T-cell (primary cell): ENCODE measurements at regions of chr17 and their contacts with region 1.

Region 1: DNA sequence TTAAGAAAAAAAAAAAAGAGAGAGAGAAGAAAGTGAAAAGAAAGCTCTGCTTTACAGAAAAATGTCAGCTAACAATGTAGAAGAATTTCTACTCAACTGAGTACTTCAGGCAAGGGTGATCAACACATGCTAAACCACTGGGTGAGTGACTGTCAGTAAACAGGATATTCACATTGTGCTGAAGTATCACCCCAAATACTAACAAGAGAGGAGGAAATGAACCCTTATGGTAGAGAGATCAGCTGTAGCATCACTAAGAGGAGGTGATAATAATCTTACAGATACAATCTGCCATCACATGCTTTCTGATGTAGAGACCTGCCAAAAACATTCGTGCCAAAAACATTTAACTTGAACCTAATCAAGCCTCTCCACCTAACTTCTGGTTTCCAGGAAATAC is 30.7 kb upstream of the ICAM2 start:
- DNase-seq: peak in 18 of 35 experiments; percentile 6 to 72 (median 26)
- ATAC-seq: peak; percentile 99 to 100 (median 100)
- H3K4me3 ChIP-seq: no peak overlapping the region
- H3K4me3 Mint-ChIP-seq: peak overlapping the region; percentile 41 to 52 (median 52)
- H3K27ac ChIP-seq: peak overlapping the region; percentile 78
- H3K27ac Mint-ChIP-seq: peak overlapping the region; percentile 92 to 97
- H3K4me1 ChIP-seq: peaks cover 14 to 41% of the 10 kb centered on the region in 2 experiments
- H3K4me1 Mint-ChIP-seq: peaks cover 31 to 67% (median 38%) of the 10 kb centered on the region in 3 donors
- H3K27me3 ChIP-seq: no peaks in the 10 kb centered on the region
- H3K27me3 Mint-ChIP-seq: no peaks in the 10 kb centered on the region

Region 2: DNA sequence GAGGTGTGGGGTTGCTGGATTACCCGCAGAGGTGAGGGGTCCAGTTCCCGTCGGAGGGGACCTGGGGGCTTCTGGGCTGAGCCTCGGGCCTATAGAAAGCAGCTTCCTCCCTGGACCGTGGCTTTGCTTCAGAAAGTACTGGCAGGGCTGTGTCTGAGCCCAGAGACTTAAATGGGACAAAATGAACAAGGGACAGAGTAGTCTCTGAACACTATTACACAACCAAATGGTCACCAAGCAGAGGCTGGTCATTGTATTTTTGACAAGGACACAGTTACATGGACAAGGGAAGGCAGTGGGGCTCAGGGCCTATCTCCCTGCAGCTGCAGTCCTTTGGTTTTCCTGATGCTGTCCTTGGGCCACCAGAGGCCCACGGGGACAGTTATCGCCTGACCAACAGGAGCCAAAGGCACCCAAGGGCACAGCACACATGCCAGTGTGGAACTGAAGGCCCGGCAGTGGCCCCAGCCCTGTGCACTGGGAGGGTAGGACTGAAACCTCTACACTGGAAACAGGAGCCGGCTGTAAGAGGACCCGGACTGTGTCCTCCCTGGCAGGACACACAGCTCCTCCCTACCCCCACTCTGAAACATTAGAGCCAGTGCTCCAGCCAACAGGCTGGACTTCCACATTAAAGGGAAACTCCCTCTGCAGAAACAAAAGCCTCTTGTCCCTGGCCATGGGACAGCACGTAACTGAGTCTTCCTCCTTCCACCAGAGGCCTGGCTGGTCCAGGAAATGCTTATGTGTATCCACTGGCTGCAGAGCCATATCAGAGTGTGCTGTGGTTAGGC is 104.8 kb after region 1 on chr17:
- CTCF ChIA-PET with region 1: no interaction called
- POLR2A ChIA-PET with region 1: no interaction called
- DNase-seq: no peak
- ATAC-seq: no peak
- H3K4me3 ChIP-seq: no peak overlapping the region
- H3K4me3 Mint-ChIP-seq: no peak overlapping the region
- H3K27ac ChIP-seq: no peak overlapping the region
- H3K27ac Mint-ChIP-seq: no peak overlapping the region
- H3K4me1 ChIP-seq: no peaks in the 10 kb centered on the region
- H3K4me1 Mint-ChIP-seq: no peaks in the 10 kb centered on the region
- H3K27me3 ChIP-seq: no peaks in the 10 kb centered on the region
- H3K27me3 Mint-ChIP-seq: no peaks in the 10 kb centered on the region

Region 3: DNA sequence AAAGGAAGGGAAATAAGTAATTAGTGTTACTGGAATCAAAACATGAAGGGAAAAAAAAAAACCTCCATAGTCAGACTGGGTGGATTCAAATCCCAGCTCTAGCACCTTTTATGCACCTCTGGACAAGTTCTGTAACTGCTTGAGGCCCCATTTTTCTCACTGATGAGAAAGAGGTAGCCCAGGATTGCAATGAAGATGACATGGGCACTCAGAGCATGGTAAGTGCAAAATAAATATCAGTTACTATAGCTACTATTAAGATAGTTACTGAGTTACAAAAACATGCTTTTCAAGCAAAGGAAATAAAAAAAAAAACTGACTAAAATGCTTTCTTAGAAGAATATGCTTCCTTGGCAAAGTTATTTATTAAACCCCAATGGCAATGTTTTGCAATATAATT is 514.4 kb after region 1 on chr17:
- CTCF ChIA-PET with region 1: no interaction called
- POLR2A ChIA-PET with region 1: interaction called in 1 of 2 experiments, 12 read pairs
- DNase-seq: no peak
- ATAC-seq: no peak
- H3K4me3 ChIP-seq: no peak overlapping the region
- H3K4me3 Mint-ChIP-seq: no peak overlapping the region
- H3K27ac ChIP-seq: no peak overlapping the region
- H3K27ac Mint-ChIP-seq: no peak overlapping the region
- H3K4me1 ChIP-seq: no peaks in the 10 kb centered on the region
- H3K4me1 Mint-ChIP-seq: no peaks in the 10 kb centered on the region
- H3K27me3 ChIP-seq: no peaks in the 10 kb centered on the region
- H3K27me3 Mint-ChIP-seq: no peaks in the 10 kb centered on the region